ENCODE measurements at regions of chr5 and their contacts with region 1.

Region 1: GRCh38 chr5:149345147-149345875 is at the start of gene GRPEL2:
- DNase-seq: peak; percentile 98
- ATAC-seq: peak; percentile 97
- H3K4me3 ChIP-seq: peak within 1 kb of the TSS; percentile 75
- H3K27ac ChIP-seq: peak within 1 kb of the TSS; percentile 65
- H3K4me1 ChIP-seq: peaks cover 2% of the 10 kb centered on the region; the same call in 1 of the 2 replicates
- H3K27me3 ChIP-seq: no peaks in the 10 kb centered on the region
- CTCF ChIP-seq: no peak
- POLR2A ChIP-seq: peak; percentile 71; the same call in 1 of the 2 replicates
- RAD21 ChIP-seq: no peak
- total RNA-seq, gene GRPEL2: 18.1 and 30.3 TPM in 2 replicates

Region 2: DNA sequence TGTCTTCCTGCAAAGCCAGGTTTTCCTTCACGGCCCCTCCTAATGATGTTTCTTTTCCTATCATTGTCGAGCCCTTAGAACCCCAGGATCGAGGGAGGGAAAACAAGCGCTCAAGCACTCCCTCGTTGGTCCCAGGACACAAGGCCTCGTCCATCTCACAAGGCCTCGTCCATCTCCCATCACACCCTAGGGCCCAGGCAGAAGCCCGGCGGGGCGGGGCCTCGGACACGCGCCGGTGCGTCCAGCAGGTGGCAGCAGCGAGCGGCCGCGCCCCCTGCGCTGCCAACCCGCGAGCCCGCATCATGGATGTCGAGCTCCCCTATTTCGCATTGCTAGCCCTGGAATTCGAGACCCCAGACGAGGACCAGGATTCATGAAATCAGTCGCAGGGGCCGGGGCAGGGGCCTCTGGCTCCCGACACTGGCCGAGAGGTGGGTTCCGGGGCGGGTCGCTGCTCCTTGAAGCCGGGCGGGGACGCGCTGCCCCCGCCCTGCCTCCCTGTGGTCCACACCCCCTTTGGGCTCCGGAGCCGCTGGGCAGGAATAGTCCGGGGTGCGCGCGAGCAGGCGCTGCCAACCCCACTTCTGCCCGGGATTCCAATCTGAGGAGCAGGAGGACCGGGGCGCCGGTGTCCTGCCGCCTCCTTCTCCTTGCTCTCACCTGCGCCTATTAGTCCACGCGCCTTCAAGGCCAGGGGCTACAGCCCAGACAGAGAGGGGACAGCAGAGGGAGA is 203.9 kb before region 1 on chr5 and contains the start of gene ABLIM3:
- CTCF ChIA-PET with region 1: no interaction called
- POLR2A ChIA-PET with region 1: no interaction called
- dilution Hi-C with region 1: no loop called
- in situ Hi-C with region 1: no loop called
- intact Hi-C with region 1: loop called (anchors 5 kb)
- DNase-seq: peak; percentile 55
- ATAC-seq: peak; percentile 84
- H3K4me3 ChIP-seq: peak within 1 kb of the TSS; percentile 70
- H3K27ac ChIP-seq: peak within 1 kb of the TSS; percentile 67
- H3K4me1 ChIP-seq: peaks cover 11% of the 10 kb centered on the region
- H3K27me3 ChIP-seq: no peaks in the 10 kb centered on the region
- CTCF ChIP-seq: peak; percentile 95
- POLR2A ChIP-seq: peak; percentile 72
- RAD21 ChIP-seq: peak; percentile 81
- total RNA-seq, gene ABLIM3: 33.3 and 34.2 TPM in 2 replicates

Region 3: GRCh38 chr5:149268928-149269557 is 76.3 kb before region 1 on chr5:
- CTCF ChIA-PET with region 1: no interaction called
- POLR2A ChIA-PET with region 1: no interaction called
- dilution Hi-C with region 1: no loop called
- in situ Hi-C with region 1: no loop called
- intact Hi-C with region 1: loop called (anchors 5 kb)
- DNase-seq: peak; percentile 61
- ATAC-seq: no peak
- H3K4me3 ChIP-seq: no peak overlapping the region
- H3K27ac ChIP-seq: no peak overlapping the region
- H3K4me1 ChIP-seq: peaks cover 4% of the 10 kb centered on the region
- H3K27me3 ChIP-seq: no peaks in the 10 kb centered on the region
- CTCF ChIP-seq: peak; percentile 72
- POLR2A ChIP-seq: no peak
- RAD21 ChIP-seq: peak; percentile 75

Region 4: DNA sequence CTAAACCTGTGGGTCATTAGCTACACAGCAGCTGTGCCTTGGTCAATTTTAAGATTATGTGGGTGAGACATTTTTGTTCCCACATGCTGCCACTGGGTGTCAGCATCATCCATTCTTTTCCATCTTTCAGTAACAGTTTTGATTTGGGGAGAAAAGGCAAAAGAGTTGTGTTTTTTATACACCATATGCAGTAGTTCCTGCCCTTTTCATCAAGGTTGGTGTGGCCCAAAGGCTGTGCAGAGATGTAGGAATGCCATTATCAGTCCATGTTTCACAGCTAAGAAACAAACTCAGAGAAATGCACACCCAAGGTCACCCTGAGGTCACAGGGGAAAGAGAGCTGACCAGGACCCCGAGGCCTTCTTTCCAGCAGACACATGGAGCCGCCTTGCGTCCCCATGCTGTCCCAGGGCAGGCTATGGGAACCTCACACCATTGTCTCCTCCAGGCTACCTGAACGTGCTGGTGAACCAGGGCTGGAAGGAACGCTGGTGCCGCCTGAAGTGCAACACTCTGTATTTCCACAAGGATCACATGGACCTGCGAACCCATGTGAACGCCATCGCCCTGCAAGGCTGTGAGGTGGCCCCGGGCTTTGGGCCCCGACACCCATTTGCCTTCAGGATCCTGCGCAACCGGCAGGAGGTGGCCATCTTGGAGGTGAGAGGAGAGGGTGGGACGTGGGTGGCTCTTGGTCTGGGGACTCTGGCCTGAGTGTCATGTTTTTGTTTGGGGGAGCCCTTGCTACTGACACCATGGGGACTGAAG is 27.8 kb before region 1 on chr5:
- CTCF ChIA-PET with region 1: interaction called, 3 read pairs
- POLR2A ChIA-PET with region 1: interaction called, 5 read pairs
- dilution Hi-C with region 1: no loop called
- in situ Hi-C with region 1: no loop called
- intact Hi-C with region 1: loop called (anchors 1 kb)
- DNase-seq: peak; percentile 58
- ATAC-seq: peak; percentile 56
- H3K4me3 ChIP-seq: no peak overlapping the region
- H3K27ac ChIP-seq: 0 out of 2 replicates have a peak overlapping the region, but pooled peaks have one; percentile 4
- H3K4me1 ChIP-seq: peaks cover 6% of the 10 kb centered on the region
- H3K27me3 ChIP-seq: no peaks in the 10 kb centered on the region
- CTCF ChIP-seq: peak; percentile 77
- POLR2A ChIP-seq: no peak
- RAD21 ChIP-seq: peak; percentile 76